CD4-positive, alpha-beta T cell (primary cell): ENCODE measurements at regions of chr22 and their contacts with region 1.

Region 1: GRCh38 chr22:21567456-21568346 is at the start of gene UBE2L3:
- DNase-seq: peak; percentile 71 to 91 (median 79)
- ATAC-seq: peak; percentile 85
- H3K4me3 ChIP-seq: peak within 1 kb of the TSS; percentile 73
- H3K4me3 Mint-ChIP-seq: peak within 1 kb of the TSS; percentile 90
- H3K27ac ChIP-seq: peak within 1 kb of the TSS; percentile 53 to 59
- H3K27ac Mint-ChIP-seq: peak within 1 kb of the TSS; percentile 93
- H3K4me1 ChIP-seq: peaks cover 47% of the 10 kb centered on the region
- H3K4me1 Mint-ChIP-seq: peaks cover 44% of the 10 kb centered on the region
- H3K27me3 ChIP-seq: no peaks in the 10 kb centered on the region
- H3K27me3 Mint-ChIP-seq: no peaks in the 10 kb centered on the region
- CTCF ChIP-seq: no peak
- total RNA-seq, gene UBE2L3: 18.7 TPM

Region 2: GRCh38 chr22:21447694-21448402 is 119.9 kb before region 1 on chr22:
- CTCF ChIA-PET with region 1: no interaction called
- POLR2A ChIA-PET with region 1: no interaction called
- intact Hi-C with region 1: no loop called
- DNase-seq: no peak
- ATAC-seq: no peak
- H3K4me3 ChIP-seq: no peak overlapping the region
- H3K4me3 Mint-ChIP-seq: no peak overlapping the region
- H3K27ac ChIP-seq: no peak overlapping the region
- H3K27ac Mint-ChIP-seq: no peak overlapping the region
- H3K4me1 ChIP-seq: no peaks in the 10 kb centered on the region
- H3K4me1 Mint-ChIP-seq: no peaks in the 10 kb centered on the region
- H3K27me3 ChIP-seq: no peaks in the 10 kb centered on the region
- H3K27me3 Mint-ChIP-seq: no peaks in the 10 kb centered on the region
- CTCF ChIP-seq: no peak

Region 3: GRCh38 chr22:21587803-21588611 is 20.3 kb after region 1 on chr22:
- CTCF ChIA-PET with region 1: no interaction called
- POLR2A ChIA-PET with region 1: no interaction called
- intact Hi-C with region 1: no loop called
- DNase-seq: peak in 3 of 14 experiments; percentile 5 to 35 (median 29)
- ATAC-seq: peak; percentile 71
- H3K4me3 ChIP-seq: no peak overlapping the region
- H3K4me3 Mint-ChIP-seq: peak overlapping the region; percentile 27
- H3K27ac ChIP-seq: peak overlapping the region in 1 of 2 donors; percentile 9
- H3K27ac Mint-ChIP-seq: peak overlapping the region; percentile 79
- H3K4me1 ChIP-seq: peaks cover 56% of the 10 kb centered on the region
- H3K4me1 Mint-ChIP-seq: peaks cover 59% of the 10 kb centered on the region
- H3K27me3 ChIP-seq: no peaks in the 10 kb centered on the region
- H3K27me3 Mint-ChIP-seq: no peaks in the 10 kb centered on the region
- CTCF ChIP-seq: no peak

Region 4: GRCh38 chr22:21615731-21616130 is 48.0 kb after region 1 on chr22:
- CTCF ChIA-PET with region 1: no interaction called
- POLR2A ChIA-PET with region 1: interaction called, 4 read pairs
- intact Hi-C with region 1: loop called in 1 of 2 experiments (anchors 5 kb)
- DNase-seq: no peak
- ATAC-seq: no peak
- H3K4me3 ChIP-seq: no peak overlapping the region
- H3K4me3 Mint-ChIP-seq: no peak overlapping the region
- H3K27ac ChIP-seq: no peak overlapping the region
- H3K27ac Mint-ChIP-seq: peak overlapping the region; percentile 27
- H3K4me1 ChIP-seq: peaks cover 7% of the 10 kb centered on the region
- H3K4me1 Mint-ChIP-seq: peaks cover 19% of the 10 kb centered on the region
- H3K27me3 ChIP-seq: no peaks in the 10 kb centered on the region
- H3K27me3 Mint-ChIP-seq: no peaks in the 10 kb centered on the region
- CTCF ChIP-seq: no peak